Dorsolateral prefrontal cortex (tissue), 120 donors: ENCODE measurements at regions of chr18 and their contacts with region 1.

Region 1: GRCh38 chr18:48680339-48681221 is 141.7 kb downstream of the CTIF start:
- DNase-seq: peak in 6 of 10 donors; percentile 45 to 66 (median 64)
- H3K4me3 ChIP-seq: no peak overlapping the region
- H3K27ac ChIP-seq: peak overlapping the region; percentile 12 to 91 (median 75)
- H3K27me3 ChIP-seq: no peaks in the 10 kb centered on the region
- CTCF ChIP-seq: peak in 21 of 56 donors; percentile 3 to 38 (median 19)

Region 2: DNA sequence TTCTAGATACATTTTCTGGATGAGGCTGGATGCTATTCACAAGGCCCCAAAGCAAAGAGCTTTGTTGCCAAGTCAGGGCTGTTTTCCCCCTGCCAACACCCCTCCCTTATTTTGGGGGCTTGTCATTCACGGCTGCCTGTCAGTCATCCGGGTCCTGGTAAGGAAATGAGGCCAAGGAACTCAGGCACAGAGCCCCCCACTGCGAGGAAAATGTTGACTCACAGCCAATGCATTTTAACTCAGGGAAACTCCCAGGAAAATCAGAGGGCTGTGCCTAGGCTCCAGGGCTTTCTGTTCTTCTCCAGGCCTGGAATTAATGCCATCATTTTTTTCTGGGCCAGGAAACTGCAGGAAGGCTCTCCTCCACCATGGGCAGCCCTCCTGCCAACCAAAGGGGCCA is 991.2 kb before region 1 on chr18:
- intact Hi-C with region 1: no loop called
- DNase-seq: no peak
- H3K4me3 ChIP-seq: no peak overlapping the region
- H3K27ac ChIP-seq: no peak overlapping the region
- H3K27me3 ChIP-seq: peaks cover 0 to 3% (median 0%) of the 10 kb centered on the region in 45 donors
- CTCF ChIP-seq: no peak

Region 3: DNA sequence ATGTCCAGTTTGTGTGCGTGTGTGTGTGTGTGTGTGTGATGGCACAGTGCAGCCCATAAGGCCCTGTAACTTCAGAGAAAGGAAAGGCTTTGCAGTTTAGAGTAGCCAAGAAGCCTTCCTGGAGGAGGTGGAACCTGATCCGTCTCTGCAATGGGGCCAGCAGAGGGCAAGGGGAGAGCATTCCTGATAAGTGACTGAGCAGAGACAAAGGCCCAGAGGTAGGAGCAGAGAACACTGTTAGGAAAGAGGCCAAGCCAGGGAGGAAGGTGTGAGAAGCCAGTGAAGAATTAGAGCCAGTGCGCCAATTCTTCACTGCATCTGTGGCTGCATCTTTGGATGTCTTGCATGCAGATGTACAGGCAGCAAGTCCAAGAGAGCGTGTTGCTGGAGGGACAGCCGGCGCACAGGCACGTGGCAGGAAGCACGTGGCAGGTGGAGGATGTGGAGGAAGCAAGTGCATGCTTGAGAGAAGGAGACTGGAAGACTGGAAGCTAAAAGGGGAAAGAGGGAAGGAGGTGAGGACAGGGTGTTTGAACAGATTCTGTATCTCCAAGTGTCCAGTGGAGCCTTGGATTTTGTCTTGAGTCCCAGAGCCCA is 54.6 kb after region 1 on chr18:
- intact Hi-C with region 1: loop called in 1 of 2 experiments (anchors 10 kb)
- DNase-seq: peak in 3 of 10 donors; percentile 57 to 68 (median 66)
- H3K4me3 ChIP-seq: no peak overlapping the region
- H3K27ac ChIP-seq: peak overlapping the region in 20 of 59 donors; percentile 2 to 79 (median 36)
- H3K27me3 ChIP-seq: no peaks in the 10 kb centered on the region
- CTCF ChIP-seq: no peak